Activated CD8-positive, alpha-beta T cell treated with anti-CD3 and anti-CD28 coated beads, Interleukin-2, amount 10 ng/mL, durations not matched to agents 7 days and 5 days (primary cell): ENCODE measurements at regions of chr15 and their contacts with region 1.

Region 1: GRCh38 chr15:64430000-64430735 is 30.2 kb upstream of the ZNF609 start:
- DNase-seq: peak; percentile 67
- ATAC-seq: peak; percentile 88
- H3K4me3 Mint-ChIP-seq: peak overlapping the region; percentile 61
- H3K27ac Mint-ChIP-seq: peak overlapping the region; percentile 88
- H3K4me1 Mint-ChIP-seq: peaks cover 47% of the 10 kb centered on the region
- H3K27me3 Mint-ChIP-seq: no peaks in the 10 kb centered on the region

Region 2: DNA sequence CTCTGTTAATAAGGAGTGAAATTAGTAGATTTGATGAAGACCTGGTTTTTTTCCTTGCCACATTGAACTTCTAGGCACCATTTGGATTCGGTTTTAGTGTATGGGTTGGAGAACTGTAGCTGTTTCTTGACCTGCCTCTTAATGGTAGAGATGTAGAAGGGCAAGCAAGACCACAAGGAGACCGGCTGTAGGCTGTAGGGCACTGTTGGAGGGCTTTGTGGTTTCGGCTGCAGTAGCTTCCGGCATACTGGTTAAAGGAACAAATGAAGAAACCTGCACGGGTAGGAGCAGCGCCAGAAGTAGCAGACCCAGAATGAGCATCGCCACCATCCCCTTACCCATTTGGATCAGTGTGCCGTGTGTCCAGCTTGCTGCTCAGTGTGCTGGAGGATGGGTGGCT is 56.8 kb before region 1 on chr15:
- CTCF ChIA-PET with region 1: no interaction called
- POLR2A ChIA-PET with region 1: no interaction called
- DNase-seq: no peak
- ATAC-seq: peak; percentile 54
- H3K4me3 Mint-ChIP-seq: peak overlapping the region; percentile 50
- H3K27ac Mint-ChIP-seq: peak overlapping the region; percentile 82
- H3K4me1 Mint-ChIP-seq: peaks cover 15% of the 10 kb centered on the region
- H3K27me3 Mint-ChIP-seq: no peaks in the 10 kb centered on the region

Region 3: GRCh38 chr15:64387562-64388168 is 42.5 kb before region 1 on chr15 and contains the start of gene TRIP4:
- CTCF ChIA-PET with region 1: interaction called, 7 read pairs
- POLR2A ChIA-PET with region 1: interaction called, 10 read pairs
- DNase-seq: peak; percentile 98
- ATAC-seq: peak; percentile 100
- H3K4me3 Mint-ChIP-seq: peak within 1 kb of the TSS; percentile 97
- H3K27ac Mint-ChIP-seq: peak within 1 kb of the TSS; percentile 93
- H3K4me1 Mint-ChIP-seq: peaks cover 24% of the 10 kb centered on the region
- H3K27me3 Mint-ChIP-seq: no peaks in the 10 kb centered on the region
- total RNA-seq, gene TRIP4: 22.3 to 23.0 TPM

Region 4: DNA sequence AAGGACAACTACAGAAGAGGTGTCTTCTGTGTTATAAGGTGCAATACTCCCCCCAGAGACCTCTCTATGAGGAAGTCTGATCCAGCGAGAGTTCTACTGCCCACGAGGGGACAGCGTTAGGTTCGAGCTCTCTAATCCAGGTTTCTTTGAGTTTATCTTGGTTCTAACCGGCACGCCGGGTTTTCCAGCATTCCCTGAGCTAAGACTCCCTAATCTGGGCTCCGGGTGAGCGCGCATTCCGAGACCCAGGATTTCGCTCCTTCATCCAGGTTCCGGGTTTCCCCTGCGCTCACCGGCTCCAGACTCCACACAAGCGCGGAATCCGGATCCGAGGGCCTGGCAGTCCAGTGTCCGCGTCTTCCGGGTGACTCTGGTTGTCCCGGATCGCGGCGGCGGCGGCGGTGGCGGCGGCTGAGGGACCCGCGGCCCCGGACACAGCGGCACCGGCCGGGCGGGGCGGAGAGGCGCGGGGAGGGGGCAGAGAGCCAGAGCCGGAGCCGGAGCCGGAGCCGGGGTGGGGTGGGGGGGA is 30.1 kb after region 1 on chr15 and contains the start of gene ZNF609:
- CTCF ChIA-PET with region 1: interaction called, 12 read pairs
- POLR2A ChIA-PET with region 1: interaction called, 22 read pairs
- DNase-seq: peak; percentile 89
- ATAC-seq: peak; percentile 68
- H3K4me3 Mint-ChIP-seq: peak within 1 kb of the TSS; percentile 90
- H3K27ac Mint-ChIP-seq: peak within 1 kb of the TSS; percentile 89
- H3K4me1 Mint-ChIP-seq: peaks cover 68% of the 10 kb centered on the region
- H3K27me3 Mint-ChIP-seq: no peaks in the 10 kb centered on the region
- total RNA-seq, gene ZNF609: 39.9 to 40.5 TPM

Region 5: DNA sequence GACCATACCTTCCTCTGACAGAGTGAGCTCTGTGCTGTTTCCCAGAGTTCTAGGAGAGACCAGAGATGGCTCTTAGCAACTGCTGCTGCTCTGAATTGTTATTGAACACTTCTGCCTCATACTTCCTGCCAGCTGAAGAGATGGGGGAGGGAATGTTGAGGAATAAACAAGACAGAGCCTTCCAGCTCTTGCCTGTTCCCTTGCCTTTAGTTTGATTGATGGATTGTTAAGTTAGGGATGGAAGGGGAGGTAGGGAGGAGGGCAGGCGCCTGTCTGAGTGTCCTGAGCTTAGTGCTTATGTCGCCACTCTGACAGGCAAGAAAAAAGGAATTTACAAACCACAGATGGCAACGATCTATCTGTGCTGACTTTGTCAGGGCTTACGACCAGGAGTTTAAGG is 73.0 kb after region 1 on chr15:
- CTCF ChIA-PET with region 1: interaction called, 12 read pairs
- POLR2A ChIA-PET with region 1: interaction called, 3 read pairs
- DNase-seq: no peak
- ATAC-seq: peak; percentile 52
- H3K4me3 Mint-ChIP-seq: peak overlapping the region; percentile 49
- H3K27ac Mint-ChIP-seq: peak overlapping the region; percentile 71
- H3K4me1 Mint-ChIP-seq: peaks cover 69% of the 10 kb centered on the region
- H3K27me3 Mint-ChIP-seq: no peaks in the 10 kb centered on the region

Region 6: GRCh38 chr15:64634576-64635498 is 204.7 kb after region 1 on chr15:
- CTCF ChIA-PET with region 1: interaction called, 10 read pairs
- POLR2A ChIA-PET with region 1: interaction called, 7 read pairs
- DNase-seq: peak; percentile 73
- ATAC-seq: peak; percentile 78
- H3K4me3 Mint-ChIP-seq: peak overlapping the region; percentile 52
- H3K27ac Mint-ChIP-seq: peak overlapping the region; percentile 83
- H3K4me1 Mint-ChIP-seq: peaks cover 73% of the 10 kb centered on the region
- H3K27me3 Mint-ChIP-seq: no peaks in the 10 kb centered on the region

Region 7: GRCh38 chr15:64651573-64652260 is 221.5 kb after region 1 on chr15:
- CTCF ChIA-PET with region 1: interaction called, 66 read pairs
- POLR2A ChIA-PET with region 1: no interaction called
- DNase-seq: peak; percentile 39
- ATAC-seq: peak; percentile 86
- H3K4me3 Mint-ChIP-seq: peak overlapping the region; percentile 24
- H3K27ac Mint-ChIP-seq: peak overlapping the region; percentile 77
- H3K4me1 Mint-ChIP-seq: peaks cover 28% of the 10 kb centered on the region
- H3K27me3 Mint-ChIP-seq: no peaks in the 10 kb centered on the region